CD4-positive, alpha-beta memory T cell (primary cell): ENCODE measurements at regions of chr12 and their contacts with region 1.

Region 1: GRCh38 chr12:13278249-13278787 is 81.8 kb downstream of the EMP1 start:
- DNase-seq: peak in 4 of 5 donors; percentile 40 to 50 (median 43)
- H3K4me3 ChIP-seq: no peak overlapping the region
- H3K4me3 Mint-ChIP-seq: peak overlapping the region in 2 of 8 donors; percentile 32 to 57
- H3K27ac ChIP-seq: no peak overlapping the region
- H3K27ac Mint-ChIP-seq: no peak overlapping the region
- H3K4me1 ChIP-seq: peaks cover 4% of the 10 kb centered on the region
- H3K4me1 Mint-ChIP-seq: peaks cover 0 to 7% (median 5%) of the 10 kb centered on the region in 4 donors
- H3K27me3 ChIP-seq: peaks cover 10% of the 10 kb centered on the region
- H3K27me3 Mint-ChIP-seq: peaks cover 30 to 35% of the 10 kb centered on the region in 2 donors

Region 2: DNA sequence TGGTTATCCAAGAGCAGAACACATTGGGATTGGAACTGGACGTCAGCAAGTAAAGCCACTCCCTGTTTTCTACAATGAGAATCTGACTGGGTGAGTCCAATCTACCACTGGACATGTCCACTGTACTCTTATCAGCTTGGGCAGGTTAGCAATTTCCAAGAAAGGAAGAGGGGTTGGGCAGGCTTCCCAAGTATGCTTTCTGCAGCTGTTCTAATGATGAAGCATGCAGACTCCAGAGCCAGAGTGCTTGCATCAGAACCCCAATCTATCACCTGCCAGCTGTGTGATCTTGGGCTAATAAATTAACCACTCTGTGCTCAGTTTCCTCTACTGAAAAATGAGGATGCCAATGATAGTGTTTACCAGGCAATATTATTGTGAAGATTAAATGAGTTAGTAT is 10.2 kb after region 1 on chr12:
- CTCF ChIA-PET with region 1: interaction called, 14 read pairs
- POLR2A ChIA-PET with region 1: no interaction called
- intact Hi-C with region 1: no loop called
- DNase-seq: no peak
- H3K4me3 ChIP-seq: no peak overlapping the region
- H3K4me3 Mint-ChIP-seq: no peak overlapping the region
- H3K27ac ChIP-seq: no peak overlapping the region
- H3K27ac Mint-ChIP-seq: no peak overlapping the region
- H3K4me1 ChIP-seq: no peaks in the 10 kb centered on the region
- H3K4me1 Mint-ChIP-seq: no peaks in the 10 kb centered on the region
- H3K27me3 ChIP-seq: no peaks in the 10 kb centered on the region
- H3K27me3 Mint-ChIP-seq: peaks cover 0 to 5% of the 10 kb centered on the region in 2 donors

Region 3: DNA sequence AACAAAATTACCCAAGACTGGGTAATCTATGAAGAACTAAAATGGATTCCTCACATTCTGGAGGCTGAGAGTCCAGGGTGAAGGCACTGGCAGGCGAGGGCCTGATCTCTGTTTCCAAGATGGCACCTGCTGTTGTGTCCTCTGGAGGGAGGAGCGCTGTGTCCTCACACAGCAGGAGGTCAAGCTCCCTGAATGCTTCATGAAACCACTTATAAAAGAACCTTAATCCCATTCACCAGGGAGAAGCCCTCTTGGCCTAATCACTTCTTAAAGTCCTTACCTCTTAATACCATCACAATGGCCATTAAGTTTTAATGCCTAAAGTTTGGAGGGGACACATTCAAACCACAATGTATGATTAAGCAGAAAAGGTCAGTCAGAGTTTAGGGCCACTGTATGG is 90.7 kb after region 1 on chr12:
- CTCF ChIA-PET with region 1: no interaction called
- POLR2A ChIA-PET with region 1: no interaction called
- intact Hi-C with region 1: no loop called
- DNase-seq: no peak
- H3K4me3 ChIP-seq: no peak overlapping the region
- H3K4me3 Mint-ChIP-seq: no peak overlapping the region
- H3K27ac ChIP-seq: no peak overlapping the region
- H3K27ac Mint-ChIP-seq: no peak overlapping the region
- H3K4me1 ChIP-seq: no peaks in the 10 kb centered on the region
- H3K4me1 Mint-ChIP-seq: no peaks in the 10 kb centered on the region
- H3K27me3 ChIP-seq: no peaks in the 10 kb centered on the region
- H3K27me3 Mint-ChIP-seq: peaks cover 4 to 9% of the 10 kb centered on the region in 2 donors